GM13976 (cell line): ENCODE measurements at regions of chr14 and their contacts with region 1.

Region 1: DNA sequence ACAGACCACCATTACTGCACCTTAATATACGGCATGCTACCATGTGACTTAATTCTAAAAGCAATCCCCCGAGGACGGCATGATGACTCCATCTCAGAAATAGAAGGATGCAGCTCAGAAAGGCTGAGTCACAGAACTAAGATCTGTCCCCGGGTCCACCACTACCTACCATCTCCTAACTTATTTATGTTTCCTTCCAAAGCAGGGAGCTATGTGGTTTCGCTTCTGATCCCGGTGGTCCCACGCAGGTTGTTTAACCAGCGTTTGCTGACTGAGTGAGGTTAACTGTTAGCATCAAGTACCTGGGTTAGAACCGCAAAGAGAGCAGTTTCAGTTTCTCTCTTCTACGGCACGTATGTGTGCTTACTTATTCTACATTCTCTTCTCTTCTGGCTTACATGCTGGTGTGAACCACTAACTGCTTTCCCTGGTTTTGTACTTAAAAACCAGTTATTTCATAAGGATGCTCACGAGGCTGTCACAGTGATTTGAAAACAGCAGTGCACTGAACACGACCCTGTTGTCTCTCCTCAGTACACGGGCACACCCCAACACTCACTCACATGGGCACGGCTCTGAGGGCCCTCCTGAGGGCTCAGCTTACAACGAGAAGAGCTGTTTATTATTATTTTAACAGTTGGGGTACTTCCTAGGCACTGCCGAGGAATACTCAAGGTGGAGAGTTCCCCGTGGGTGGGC is 66.7 kb downstream of the CCDC88C start:
- DNase-seq: peak; percentile 79
- CTCF ChIP-seq: no peak

Region 2: DNA sequence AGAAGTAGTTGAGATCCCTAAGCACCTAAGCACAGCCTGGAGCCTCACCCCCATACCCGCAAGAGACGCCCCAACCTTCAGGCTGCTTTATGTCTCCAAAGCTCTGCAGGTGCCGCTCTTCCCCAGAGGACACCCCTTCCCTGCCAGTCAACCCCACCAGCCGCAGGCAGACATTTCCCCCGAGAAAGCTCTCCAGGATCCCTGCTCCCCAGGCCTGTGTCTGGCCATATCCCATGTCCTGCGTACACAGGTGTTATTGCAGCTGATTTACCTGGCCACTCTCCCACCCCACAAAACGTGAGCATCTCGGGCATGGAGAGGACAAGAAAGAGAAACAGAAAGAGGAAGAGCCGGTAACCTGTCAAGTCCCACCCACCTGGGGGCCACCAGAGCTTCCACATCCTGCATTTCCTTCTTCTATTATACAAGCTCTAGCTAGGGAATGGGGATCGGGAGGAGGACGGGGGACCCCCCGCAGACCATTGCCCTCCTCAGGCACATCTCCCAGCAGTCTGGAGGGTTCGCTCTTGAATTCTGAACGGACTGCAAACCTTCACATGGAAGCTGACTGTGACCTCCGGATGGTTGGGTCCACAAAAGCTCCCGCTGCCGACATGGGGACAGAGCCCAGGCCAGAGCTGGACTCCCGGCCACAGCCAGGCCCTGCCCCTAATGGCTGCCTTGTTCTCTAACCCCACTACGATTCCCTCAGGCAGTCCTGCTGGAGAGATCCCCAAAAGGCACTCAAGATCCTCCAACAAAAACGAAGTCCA is 49.1 kb after region 1 on chr14:
- in situ Hi-C with region 1: loop called (anchors 10 kb)
- DNase-seq: peak; percentile 70
- CTCF ChIP-seq: peak; percentile 22